ENCODE measurements at regions of chr1 and their contacts with region 1.

Region 1: GRCh38 chr1:182143154-182143657 is 81.7 kb upstream of the ZNF648 start:
- DNase-seq: peak; percentile 74
- CTCF ChIP-seq: peak; percentile 95

Region 2: DNA sequence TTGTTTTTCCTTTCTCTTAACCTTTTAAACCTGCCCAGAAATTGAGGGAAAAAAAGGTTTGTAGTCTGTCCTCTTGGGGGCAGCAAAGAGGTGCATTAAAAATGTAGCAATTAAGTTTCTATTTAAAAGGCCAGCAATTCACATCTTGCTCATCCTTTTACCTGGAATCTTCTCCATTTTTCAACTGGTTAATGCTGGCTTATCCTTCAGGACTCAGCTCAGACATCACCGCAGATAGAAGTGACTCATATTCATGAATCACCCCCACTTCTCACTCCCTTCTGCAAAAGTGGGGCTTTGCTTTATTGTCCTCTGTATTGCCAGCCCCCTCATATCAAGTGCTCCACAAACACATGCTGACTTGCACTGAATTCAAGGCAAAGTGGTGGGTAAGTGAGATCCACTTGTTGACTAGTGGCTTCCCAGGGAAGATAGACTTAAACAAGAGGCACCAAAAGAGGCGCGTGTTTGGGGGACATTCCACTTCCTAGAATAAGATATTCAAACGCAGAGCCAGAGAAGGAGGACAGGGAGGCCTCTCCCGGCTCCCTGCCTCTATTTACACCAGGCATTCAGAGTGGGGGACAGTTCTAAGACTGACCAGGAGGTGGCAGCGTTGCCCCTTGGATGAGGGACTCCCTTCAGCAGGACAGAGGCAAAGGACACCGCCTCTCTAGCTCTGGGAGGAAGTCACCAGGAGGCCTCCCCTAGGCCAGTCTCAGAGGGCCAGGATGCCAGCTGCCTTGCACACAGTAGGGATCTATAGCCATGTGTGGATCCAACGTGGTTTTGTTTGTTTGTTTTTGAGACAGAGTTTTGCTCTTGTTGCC is 58.5 kb before region 1 on chr1:
- CTCF ChIA-PET with region 1: interaction called, 29 read pairs
- POLR2A ChIA-PET with region 1: no interaction called
- DNase-seq: peak; percentile 85
- CTCF ChIP-seq: peak; percentile 86

Region 3: DNA sequence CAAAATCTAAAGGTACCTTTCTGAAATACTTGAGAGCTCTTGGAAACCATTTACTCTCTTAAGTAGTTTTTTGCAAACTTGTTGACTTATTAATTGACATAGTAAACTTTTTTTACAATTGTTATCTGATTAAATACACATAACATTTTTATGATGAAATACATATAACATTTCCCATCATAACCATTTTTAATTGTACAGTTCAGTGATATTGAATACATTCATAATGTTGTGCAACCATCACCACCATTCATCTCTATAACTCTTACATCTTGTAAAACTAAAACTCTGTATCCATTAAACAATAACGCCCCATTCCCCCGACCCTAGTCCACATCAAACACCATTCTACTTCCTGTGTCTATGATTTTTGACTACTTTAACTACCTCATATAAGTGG is 14.0 kb after region 1 on chr1:
- CTCF ChIA-PET with region 1: interaction called, 26 read pairs
- POLR2A ChIA-PET with region 1: no interaction called
- DNase-seq: no peak
- CTCF ChIP-seq: no peak

Region 4: DNA sequence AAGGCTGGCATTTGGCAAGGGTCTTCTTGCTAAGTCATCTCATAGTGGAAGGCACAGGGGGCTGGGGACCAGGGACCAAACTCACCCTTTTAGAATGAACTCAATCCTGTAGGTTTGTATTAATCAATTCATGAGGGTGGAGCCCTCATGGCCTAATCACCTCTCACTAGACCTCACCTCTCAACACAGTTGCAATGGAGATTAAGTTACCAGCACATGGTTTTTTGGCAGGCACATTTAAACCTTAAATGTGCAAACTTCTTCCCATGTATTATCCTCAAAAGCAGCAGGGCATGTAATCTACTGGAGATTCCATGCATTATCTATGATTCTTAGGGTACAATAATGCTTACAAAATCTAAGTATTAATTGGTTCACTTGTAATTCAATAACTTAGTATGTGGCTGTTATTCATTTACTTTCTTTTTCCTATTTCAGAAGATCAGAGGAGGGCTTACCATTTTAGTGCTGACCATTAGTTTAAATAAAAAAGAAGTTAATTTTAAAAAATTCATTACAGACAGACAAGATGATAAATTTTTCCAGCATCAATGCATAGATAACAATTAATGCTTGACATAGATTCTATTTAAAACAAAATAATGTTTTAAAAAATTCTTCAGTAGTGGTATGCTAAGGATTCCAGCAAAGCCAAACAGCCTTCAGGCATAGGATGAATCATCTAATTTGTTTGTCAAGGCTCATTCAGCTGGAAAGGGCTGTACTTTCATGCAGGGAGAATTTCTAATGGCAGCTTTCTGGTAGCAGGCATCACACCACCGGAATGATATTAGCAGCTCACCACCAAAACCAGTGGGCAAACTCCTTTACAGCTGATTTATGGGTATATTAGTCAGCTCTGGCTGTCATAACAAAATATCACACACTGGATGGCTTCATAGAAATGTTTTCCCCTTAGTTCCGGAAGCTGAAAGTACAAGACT is 42.9 kb after region 1 on chr1:
- CTCF ChIA-PET with region 1: interaction called, 13 read pairs
- POLR2A ChIA-PET with region 1: no interaction called
- DNase-seq: no peak
- CTCF ChIP-seq: no peak

Region 5: DNA sequence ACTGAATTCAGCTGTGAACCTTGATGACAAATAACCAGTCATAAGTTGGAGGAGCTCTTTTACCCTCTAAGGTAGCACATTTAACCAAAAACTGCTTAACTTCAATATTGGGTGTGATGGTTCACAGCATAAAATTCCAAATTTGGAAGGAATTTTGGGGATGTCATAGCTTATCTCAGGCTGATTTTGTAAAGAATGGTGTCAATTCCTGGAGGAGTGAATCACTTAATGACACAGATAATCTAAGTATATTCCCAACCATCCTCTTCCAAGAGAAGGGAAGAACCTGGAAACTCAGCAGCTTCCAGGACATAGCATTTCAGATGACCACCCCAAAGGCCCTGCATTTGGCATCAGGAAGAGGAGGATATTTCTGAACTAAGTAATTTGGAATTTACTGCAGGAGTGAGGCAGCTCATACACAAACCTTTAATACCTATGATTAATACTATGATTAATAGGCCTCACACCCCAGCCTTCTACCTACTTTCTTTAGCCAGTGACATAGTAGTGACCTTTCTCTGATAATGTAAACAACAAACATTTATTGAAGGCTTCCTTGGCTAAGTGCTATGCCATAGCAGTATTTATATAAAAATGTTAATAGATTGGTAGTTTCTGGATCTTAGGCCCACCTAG is 233.8 kb after region 1 on chr1:
- CTCF ChIA-PET with region 1: interaction called, 11 read pairs
- POLR2A ChIA-PET with region 1: no interaction called
- DNase-seq: no peak
- CTCF ChIP-seq: no peak

Region 6: GRCh38 chr1:182397771-182398393 is 254.7 kb after region 1 on chr1:
- CTCF ChIA-PET with region 1: interaction called, 245 read pairs
- POLR2A ChIA-PET with region 1: interaction called, 6 read pairs
- DNase-seq: no peak
- CTCF ChIP-seq: no peak

Measured in GM10248 (cell line).